Natural killer cell (primary cell): ENCODE measurements at regions of chr17 and their contacts with region 1.

Region 1: DNA sequence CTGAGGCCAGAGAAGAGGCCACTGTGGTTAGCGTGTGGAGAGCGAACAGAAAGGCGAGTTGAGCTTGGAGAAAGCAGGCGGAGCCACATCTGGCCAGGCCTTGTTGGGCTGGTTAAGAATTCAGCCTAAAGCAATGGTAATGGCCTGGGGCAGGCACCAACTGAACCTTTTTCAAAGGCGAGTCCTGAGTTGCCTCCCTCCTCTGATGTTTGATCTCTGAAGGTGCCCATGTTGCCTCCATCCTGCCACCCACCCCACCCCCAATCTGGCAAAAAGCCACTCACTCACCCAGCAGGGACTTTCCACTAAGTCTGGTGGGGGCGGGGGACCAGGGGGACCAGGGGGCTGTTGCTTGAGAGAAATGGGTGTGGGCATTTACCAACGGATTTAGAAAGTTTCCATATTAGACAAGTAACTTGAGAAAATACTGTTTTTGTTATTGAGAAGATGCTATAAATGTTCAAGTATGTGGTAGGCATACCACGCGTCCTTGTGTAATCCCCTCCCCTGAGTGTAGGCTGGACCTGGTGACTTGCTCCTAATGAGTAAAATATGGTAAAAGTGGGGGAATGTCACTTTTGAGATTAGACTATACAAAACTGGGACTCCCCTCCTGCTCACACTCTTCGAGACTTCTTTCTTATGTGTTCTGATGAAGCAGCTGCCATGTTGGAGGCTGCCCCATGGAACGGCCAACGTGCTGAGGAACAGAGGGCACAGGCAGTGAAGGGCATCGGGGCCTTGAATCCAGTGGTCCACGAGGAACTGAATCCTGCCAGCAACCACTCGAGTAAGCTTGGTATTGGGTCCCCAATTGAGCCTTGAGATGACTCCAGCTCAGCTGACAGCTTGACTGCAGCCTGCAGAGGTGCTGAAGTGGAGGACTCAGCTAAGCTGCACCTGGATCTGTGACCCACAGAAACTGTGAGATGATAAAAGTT is 29.9 kb upstream of the TNS4 start:
- DNase-seq: peak in 1 of 2 donors; percentile 87
- ATAC-seq: no peak
- H3K4me3 ChIP-seq: no peak overlapping the region
- H3K4me3 Mint-ChIP-seq: peak overlapping the region; percentile 1
- H3K27ac ChIP-seq: peak overlapping the region; percentile 50
- H3K27ac Mint-ChIP-seq: peak overlapping the region in 1 of 2 donors; percentile 58
- H3K4me1 ChIP-seq: peaks cover 73% of the 10 kb centered on the region
- H3K4me1 Mint-ChIP-seq: peaks cover 51 to 52% of the 10 kb centered on the region in 2 donors
- H3K27me3 ChIP-seq: no peaks in the 10 kb centered on the region
- H3K27me3 Mint-ChIP-seq: peaks cover 11% of the 10 kb centered on the region in 2 donors
- CTCF ChIP-seq: no peak

Region 2: GRCh38 chr17:40303009-40303657 is 228.2 kb before region 1 on chr17:
- intact Hi-C with region 1: loop called (anchors 5 kb)
- DNase-seq: peak in 1 of 2 donors; percentile 84
- ATAC-seq: peak; percentile 78 to 86 (median 84)
- H3K4me3 ChIP-seq: no peak overlapping the region
- H3K4me3 Mint-ChIP-seq: no peak overlapping the region
- H3K27ac ChIP-seq: no peak overlapping the region
- H3K27ac Mint-ChIP-seq: peak overlapping the region in 1 of 2 donors; percentile 39
- H3K4me1 ChIP-seq: peaks cover 18% of the 10 kb centered on the region
- H3K4me1 Mint-ChIP-seq: peaks cover 6 to 7% of the 10 kb centered on the region in 2 donors
- H3K27me3 ChIP-seq: no peaks in the 10 kb centered on the region
- H3K27me3 Mint-ChIP-seq: no peaks in the 10 kb centered on the region
- CTCF ChIP-seq: peak; percentile 81

Region 3: GRCh38 chr17:40358323-40359038 is 172.8 kb before region 1 on chr17:
- intact Hi-C with region 1: loop called (anchors 1 kb)
- DNase-seq: peak; percentile 86 to 94
- ATAC-seq: peak; percentile 64 to 78 (median 75)
- H3K4me3 ChIP-seq: no peak overlapping the region
- H3K4me3 Mint-ChIP-seq: no peak overlapping the region
- H3K27ac ChIP-seq: no peak overlapping the region
- H3K27ac Mint-ChIP-seq: no peak overlapping the region
- H3K4me1 ChIP-seq: peaks cover 22% of the 10 kb centered on the region
- H3K4me1 Mint-ChIP-seq: peaks cover 9 to 31% of the 10 kb centered on the region in 2 donors
- H3K27me3 ChIP-seq: peaks cover 5% of the 10 kb centered on the region
- H3K27me3 Mint-ChIP-seq: peaks cover 7 to 18% of the 10 kb centered on the region in 2 donors
- CTCF ChIP-seq: peak; percentile 95

Region 4: DNA sequence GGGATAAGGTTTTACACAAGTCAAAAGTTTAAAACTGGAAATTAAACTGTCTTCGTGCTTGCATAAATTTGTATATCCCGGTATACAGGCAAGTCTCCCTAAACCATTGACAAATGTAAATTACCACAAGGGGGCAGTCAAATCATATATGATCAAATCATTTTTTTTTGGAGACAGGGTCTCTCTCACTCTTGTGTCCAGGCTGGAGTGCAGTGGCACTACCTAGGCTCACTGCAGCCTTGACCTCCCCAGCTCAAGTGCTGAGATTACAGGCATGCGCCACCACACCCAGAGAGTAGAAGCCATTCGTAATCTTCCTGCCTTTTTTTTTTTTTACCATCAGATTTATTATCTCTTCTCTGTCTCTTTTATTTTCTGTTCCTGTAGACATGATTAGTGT is 132.1 kb before region 1 on chr17:
- intact Hi-C with region 1: loop called (anchors 1 kb)
- DNase-seq: peak in 1 of 2 donors; percentile 79
- ATAC-seq: peak in 2 of 3 donors; percentile 69 to 76
- H3K4me3 ChIP-seq: no peak overlapping the region
- H3K4me3 Mint-ChIP-seq: no peak overlapping the region
- H3K27ac ChIP-seq: no peak overlapping the region
- H3K27ac Mint-ChIP-seq: no peak overlapping the region
- H3K4me1 ChIP-seq: no peaks in the 10 kb centered on the region
- H3K4me1 Mint-ChIP-seq: peaks cover 0 to 5% of the 10 kb centered on the region in 2 donors
- H3K27me3 ChIP-seq: no peaks in the 10 kb centered on the region
- H3K27me3 Mint-ChIP-seq: no peaks in the 10 kb centered on the region
- CTCF ChIP-seq: peak; percentile 74

Region 5: GRCh38 chr17:40443583-40444327 is 87.6 kb before region 1 on chr17:
- intact Hi-C with region 1: loop called (anchors 1 kb)
- DNase-seq: peak; percentile 61 to 82
- ATAC-seq: peak; percentile 76 to 87 (median 82)
- H3K4me3 ChIP-seq: peak overlapping the region; percentile 55
- H3K4me3 Mint-ChIP-seq: peak overlapping the region; percentile 78
- H3K27ac ChIP-seq: peak overlapping the region; percentile 5
- H3K27ac Mint-ChIP-seq: peak overlapping the region; percentile 57 to 78
- H3K4me1 ChIP-seq: peaks cover 54% of the 10 kb centered on the region
- H3K4me1 Mint-ChIP-seq: peaks cover 27 to 35% of the 10 kb centered on the region in 2 donors
- H3K27me3 ChIP-seq: no peaks in the 10 kb centered on the region
- H3K27me3 Mint-ChIP-seq: peaks cover 0 to 25% of the 10 kb centered on the region in 2 donors
- CTCF ChIP-seq: peak; percentile 44

Region 6: GRCh38 chr17:40480501-40481003 is 50.8 kb before region 1 on chr17:
- intact Hi-C with region 1: loop called (anchors 1 kb)
- DNase-seq: peak; percentile 67 to 95
- ATAC-seq: peak; percentile 84
- H3K4me3 ChIP-seq: no peak overlapping the region
- H3K4me3 Mint-ChIP-seq: peak overlapping the region; percentile 72
- H3K27ac ChIP-seq: peak overlapping the region; percentile 86
- H3K27ac Mint-ChIP-seq: peak overlapping the region; percentile 71 to 83
- H3K4me1 ChIP-seq: peaks cover 71% of the 10 kb centered on the region
- H3K4me1 Mint-ChIP-seq: peaks cover 37 to 64% of the 10 kb centered on the region in 2 donors
- H3K27me3 ChIP-seq: no peaks in the 10 kb centered on the region
- H3K27me3 Mint-ChIP-seq: no peaks in the 10 kb centered on the region
- CTCF ChIP-seq: no peak

Region 7: GRCh38 chr17:40516581-40517285 is 14.6 kb before region 1 on chr17:
- intact Hi-C with region 1: loop called (anchors 1 kb)
- DNase-seq: peak; percentile 60 to 92
- ATAC-seq: peak; percentile 71 to 85 (median 79)
- H3K4me3 ChIP-seq: peak overlapping the region; percentile 30
- H3K4me3 Mint-ChIP-seq: peak overlapping the region; percentile 87
- H3K27ac ChIP-seq: peak overlapping the region; percentile 15
- H3K27ac Mint-ChIP-seq: peak overlapping the region; percentile 70 to 86
- H3K4me1 ChIP-seq: peaks cover 64% of the 10 kb centered on the region
- H3K4me1 Mint-ChIP-seq: peaks cover 63 to 71% of the 10 kb centered on the region in 2 donors
- H3K27me3 ChIP-seq: no peaks in the 10 kb centered on the region
- H3K27me3 Mint-ChIP-seq: peaks cover 0 to 14% of the 10 kb centered on the region in 2 donors
- CTCF ChIP-seq: no peak